PC-9 (cell line): ENCODE measurements at regions of chr1 and their contacts with region 1.

Region 1: GRCh38 chr1:173997796-173998195 is 24.4 kb downstream of the RC3H1 start:
- DNase-seq: peak in 1 of 2 experiments; percentile 63
- H3K4me3 ChIP-seq: no peak overlapping the region
- H3K27ac ChIP-seq: peak overlapping the region; percentile 20; the same call in 1 of the 2 replicates
- H3K4me1 ChIP-seq: peaks cover 15% of the 10 kb centered on the region
- H3K27me3 ChIP-seq: no peaks in the 10 kb centered on the region
- CTCF ChIP-seq: no peak

Region 2: DNA sequence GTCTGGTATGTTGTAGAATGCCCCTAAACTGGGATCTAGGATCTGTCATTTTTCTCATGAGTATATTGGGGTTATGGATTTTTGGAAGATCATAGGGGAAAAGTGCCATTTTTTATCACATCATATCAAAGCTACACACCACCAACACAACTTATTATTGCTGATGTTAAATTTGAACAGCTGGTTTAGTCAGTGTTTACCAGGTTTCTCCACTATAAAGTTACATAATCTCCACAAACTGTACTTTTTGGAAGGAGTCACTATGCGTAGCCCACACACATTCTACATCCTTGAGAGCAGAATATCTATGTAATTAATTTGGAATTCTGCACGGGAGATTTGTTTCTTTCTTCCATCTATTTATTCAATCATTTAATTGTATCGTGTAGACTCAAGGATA is 10.8 kb before region 1 on chr1:
- CTCF ChIA-PET with region 1: no interaction called
- POLR2A ChIA-PET with region 1: interaction called, 15 read pairs
- intact Hi-C with region 1: no loop called
- DNase-seq: no peak
- H3K4me3 ChIP-seq: no peak overlapping the region
- H3K27ac ChIP-seq: no peak overlapping the region
- H3K4me1 ChIP-seq: no peaks in the 10 kb centered on the region
- H3K27me3 ChIP-seq: no peaks in the 10 kb centered on the region
- CTCF ChIP-seq: no peak

Region 3: GRCh38 chr1:174008979-174009378 is 11.2 kb after region 1 on chr1:
- CTCF ChIA-PET with region 1: no interaction called
- POLR2A ChIA-PET with region 1: no interaction called
- intact Hi-C with region 1: no loop called
- DNase-seq: no peak
- H3K4me3 ChIP-seq: no peak overlapping the region
- H3K27ac ChIP-seq: no peak overlapping the region
- H3K4me1 ChIP-seq: no peaks in the 10 kb centered on the region
- H3K27me3 ChIP-seq: no peaks in the 10 kb centered on the region
- CTCF ChIP-seq: no peak

Region 4: DNA sequence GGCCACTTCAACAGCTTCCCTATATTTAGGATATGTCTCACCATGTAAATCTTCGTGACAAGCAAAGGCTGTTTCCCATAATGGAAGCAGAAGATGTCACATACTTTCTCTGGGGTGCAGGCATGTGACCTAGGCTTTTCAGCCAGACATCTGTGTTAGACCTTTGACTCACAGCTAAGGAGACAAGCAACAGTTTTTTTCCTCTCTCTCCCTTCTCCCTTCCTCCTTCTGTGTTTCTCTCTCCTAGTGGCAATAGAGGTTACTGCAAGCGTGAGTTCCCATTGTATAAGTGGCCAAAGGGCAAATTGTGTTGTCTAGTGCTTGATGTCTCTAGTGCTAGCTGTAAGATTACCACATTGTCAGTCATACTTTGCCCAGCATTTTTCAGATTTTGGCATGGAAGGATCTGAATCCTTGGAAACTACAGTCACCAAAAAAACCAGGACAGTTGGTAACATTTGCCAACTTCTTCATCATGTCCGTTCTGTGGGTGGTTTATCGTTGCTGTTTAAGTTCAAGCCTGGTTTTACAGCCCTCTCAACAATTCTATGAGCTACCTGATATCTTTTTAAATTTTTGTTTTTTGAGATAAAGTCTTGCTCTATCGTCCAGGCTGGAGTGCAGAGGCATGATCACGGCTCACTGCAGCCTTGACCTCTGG is 117.1 kb after region 1 on chr1:
- CTCF ChIA-PET with region 1: interaction called, 12 read pairs
- POLR2A ChIA-PET with region 1: no interaction called
- intact Hi-C with region 1: no loop called
- DNase-seq: peak; percentile 17 to 51
- H3K4me3 ChIP-seq: no peak overlapping the region
- H3K27ac ChIP-seq: no peak overlapping the region
- H3K4me1 ChIP-seq: peaks cover 10% of the 10 kb centered on the region; the same call in 1 of the 2 replicates
- H3K27me3 ChIP-seq: no peaks in the 10 kb centered on the region
- CTCF ChIP-seq: peak; percentile 71

Region 5: DNA sequence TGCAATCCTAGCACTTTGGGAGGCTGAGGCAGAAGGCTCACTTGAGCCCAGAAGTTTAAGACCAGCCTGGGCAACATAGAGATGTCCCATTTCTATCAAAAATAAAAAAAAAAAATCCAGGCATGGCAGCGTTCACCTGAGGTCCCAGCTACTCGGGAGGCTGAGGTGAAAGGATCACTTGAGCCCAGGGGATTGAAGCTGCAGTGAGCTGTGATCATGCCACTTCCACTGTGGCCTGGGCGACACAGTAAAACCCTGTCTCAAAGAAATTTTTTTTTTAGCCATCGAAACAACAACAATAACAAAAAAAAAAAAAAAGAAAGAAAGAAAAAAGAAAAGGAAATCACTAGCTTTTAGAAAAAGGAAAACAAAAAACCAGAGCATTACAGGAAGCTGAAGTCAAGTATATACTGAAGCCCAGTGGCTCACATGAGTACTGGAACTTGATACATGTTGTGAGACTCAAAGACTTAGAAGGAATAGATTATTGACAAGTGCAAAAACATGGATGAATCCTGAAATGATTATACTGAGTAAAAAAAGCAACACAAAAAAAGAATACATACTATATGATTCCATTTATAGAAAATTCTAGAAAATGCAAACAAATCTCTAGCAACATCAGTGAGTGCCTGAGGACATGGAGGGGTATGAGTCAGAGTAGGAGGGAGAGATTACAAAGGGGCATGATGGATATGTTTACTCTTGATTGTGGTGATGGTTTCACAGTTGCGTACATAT is 155.5 kb after region 1 on chr1:
- CTCF ChIA-PET with region 1: no interaction called
- POLR2A ChIA-PET with region 1: interaction called, 12 read pairs
- intact Hi-C with region 1: no loop called
- DNase-seq: peak in 1 of 2 experiments; percentile 71
- H3K4me3 ChIP-seq: no peak overlapping the region
- H3K27ac ChIP-seq: no peak overlapping the region
- H3K4me1 ChIP-seq: peaks cover 34% of the 10 kb centered on the region
- H3K27me3 ChIP-seq: no peaks in the 10 kb centered on the region
- CTCF ChIP-seq: no peak